ENCODE measurements at regions of chr3 and their contacts with region 1.

Region 1: GRCh38 chr3:52739730-52740129 is 31.0 kb downstream of the NEK4 start:
- DNase-seq: no peak
- ATAC-seq: no peak
- H3K4me3 ChIP-seq: no peak overlapping the region
- H3K27ac ChIP-seq: no peak overlapping the region
- H3K4me1 ChIP-seq: no peaks in the 10 kb centered on the region
- H3K27me3 ChIP-seq: no peaks in the 10 kb centered on the region
- CTCF ChIP-seq: no peak

Region 2: DNA sequence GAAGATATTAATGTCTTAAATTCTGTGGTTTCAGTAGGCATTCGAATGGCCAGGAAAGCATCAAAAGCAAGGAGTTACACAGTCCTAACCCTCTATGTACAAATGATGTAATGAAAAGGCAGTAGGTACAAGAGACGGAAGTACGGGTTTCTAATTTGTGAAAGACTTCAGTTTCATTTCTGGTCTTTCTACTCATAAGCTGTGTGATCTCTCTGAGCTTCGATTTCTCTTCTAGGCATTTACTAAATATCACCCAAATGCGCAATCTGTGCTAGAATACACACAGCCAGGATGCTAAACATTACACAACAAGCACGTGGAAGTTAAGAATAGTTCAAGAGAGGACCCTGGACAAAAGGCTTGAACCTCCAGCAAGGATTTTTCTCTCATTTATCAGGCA is 175.6 kb after region 1 on chr3:
- intact Hi-C with region 1: no loop called
- DNase-seq: no peak
- ATAC-seq: peak; percentile 87
- H3K4me3 ChIP-seq: no peak overlapping the region
- H3K27ac ChIP-seq: no peak overlapping the region
- H3K4me1 ChIP-seq: no peaks in the 10 kb centered on the region
- H3K27me3 ChIP-seq: no peaks in the 10 kb centered on the region
- CTCF ChIP-seq: no peak

Region 3: DNA sequence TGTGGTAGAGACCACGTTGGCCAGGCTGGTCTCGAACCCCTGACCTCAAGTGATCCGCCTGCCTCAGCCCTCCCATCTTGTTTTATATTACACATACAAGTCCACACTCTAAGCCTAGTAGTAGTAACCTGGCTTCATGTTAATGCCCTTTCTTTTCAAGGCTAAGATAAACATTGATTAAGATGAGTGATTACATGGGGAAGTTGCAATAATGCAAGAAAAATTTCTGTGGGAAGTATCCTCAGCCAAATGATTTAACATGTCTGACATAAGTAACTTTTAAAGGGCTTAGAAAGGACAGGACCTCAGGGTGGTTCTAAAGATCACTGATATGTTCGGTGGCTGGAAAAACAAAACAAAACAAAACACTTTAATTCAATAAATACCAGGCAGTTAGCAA is 234.1 kb after region 1 on chr3:
- intact Hi-C with region 1: no loop called
- DNase-seq: no peak
- ATAC-seq: no peak
- H3K4me3 ChIP-seq: no peak overlapping the region
- H3K27ac ChIP-seq: no peak overlapping the region
- H3K4me1 ChIP-seq: no peaks in the 10 kb centered on the region
- H3K27me3 ChIP-seq: no peaks in the 10 kb centered on the region
- CTCF ChIP-seq: no peak

Region 4: DNA sequence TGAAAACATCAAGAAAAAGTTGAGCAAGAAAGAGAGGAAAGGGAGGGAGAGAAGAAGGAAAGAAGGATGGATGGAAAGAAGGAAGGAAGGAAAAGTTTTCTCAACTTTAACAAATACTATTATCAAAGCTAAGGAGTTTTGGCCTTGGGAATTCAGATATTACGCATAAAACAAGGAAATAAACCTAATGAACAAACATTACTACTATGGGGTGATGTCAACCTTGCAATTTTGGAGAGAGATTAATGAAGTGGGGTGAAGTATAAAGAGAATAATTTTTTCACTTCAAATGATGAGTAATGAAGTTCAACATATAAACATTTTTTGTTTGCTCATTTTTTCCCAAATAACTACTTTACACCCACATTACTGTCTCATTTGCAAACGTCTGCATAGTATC is 250.9 kb after region 1 on chr3:
- intact Hi-C with region 1: loop called (anchors 5 kb)
- DNase-seq: no peak
- ATAC-seq: no peak
- H3K4me3 ChIP-seq: no peak overlapping the region
- H3K27ac ChIP-seq: no peak overlapping the region
- H3K4me1 ChIP-seq: peaks cover 3% of the 10 kb centered on the region
- H3K27me3 ChIP-seq: no peaks in the 10 kb centered on the region
- CTCF ChIP-seq: no peak